ENCODE measurements at regions of chr17 and their contacts with region 1.

Region 1: DNA sequence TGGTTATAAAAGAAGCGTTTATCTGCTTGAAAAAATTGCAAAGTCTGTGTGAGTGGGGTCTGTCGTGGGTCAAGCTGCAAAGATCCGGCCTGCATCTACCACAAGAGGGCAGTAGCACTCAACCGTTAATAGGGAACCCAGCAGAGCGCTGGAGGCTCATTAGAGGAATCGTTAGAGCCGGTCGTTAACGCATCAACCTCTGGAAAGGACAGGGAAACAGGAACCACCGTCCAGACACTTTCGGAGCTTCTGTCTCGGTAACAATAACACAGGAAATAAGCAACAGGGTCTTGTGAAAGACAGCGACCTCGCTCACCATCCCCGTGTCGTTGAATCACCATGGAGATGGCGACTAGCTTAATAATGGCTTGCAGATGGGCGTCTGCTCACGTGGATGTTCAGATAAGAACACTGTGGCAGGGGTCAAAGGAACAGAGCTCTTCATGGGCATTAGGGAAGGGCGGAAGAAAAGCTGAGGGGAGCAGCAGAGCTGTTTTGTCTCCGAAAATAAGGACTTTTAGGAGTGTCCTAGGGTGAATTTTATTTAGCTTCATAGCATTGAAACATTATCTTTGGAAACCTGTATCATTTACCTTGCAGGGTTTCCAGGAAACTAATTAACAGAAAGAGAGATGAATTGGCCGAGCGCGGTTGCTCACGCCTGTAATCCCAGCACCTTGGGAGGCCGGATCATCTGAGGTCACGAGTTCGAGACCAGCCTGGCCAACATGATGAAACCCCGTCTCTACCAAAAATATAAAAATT is 11.9 kb upstream of the NSRP1 start:
- DNase-seq: peak; percentile 86 to 90
- H3K4me3 ChIP-seq: peak overlapping the region; percentile 42
- H3K4me3 Mint-ChIP-seq: peak overlapping the region; percentile 73
- H3K27ac Mint-ChIP-seq: peak overlapping the region; percentile 80
- H3K4me1 ChIP-seq: no peaks in the 10 kb centered on the region
- H3K4me1 Mint-ChIP-seq: peaks cover 7% of the 10 kb centered on the region
- H3K27me3 ChIP-seq: no peaks in the 10 kb centered on the region
- H3K27me3 Mint-ChIP-seq: no peaks in the 10 kb centered on the region
- CTCF ChIP-seq: peak; percentile 94 to 97

Region 2: GRCh38 chr17:30124273-30124796 is 19.6 kb after region 1 on chr17:
- CTCF ChIA-PET with region 1: interaction called, 19 read pairs
- POLR2A ChIA-PET with region 1: no interaction called
- intact Hi-C with region 1: no loop called
- DNase-seq: no peak
- H3K4me3 ChIP-seq: no peak overlapping the region
- H3K4me3 Mint-ChIP-seq: no peak overlapping the region
- H3K27ac Mint-ChIP-seq: no peak overlapping the region
- H3K4me1 ChIP-seq: no peaks in the 10 kb centered on the region
- H3K4me1 Mint-ChIP-seq: no peaks in the 10 kb centered on the region
- H3K27me3 ChIP-seq: no peaks in the 10 kb centered on the region
- H3K27me3 Mint-ChIP-seq: no peaks in the 10 kb centered on the region
- CTCF ChIP-seq: no peak

Region 3: DNA sequence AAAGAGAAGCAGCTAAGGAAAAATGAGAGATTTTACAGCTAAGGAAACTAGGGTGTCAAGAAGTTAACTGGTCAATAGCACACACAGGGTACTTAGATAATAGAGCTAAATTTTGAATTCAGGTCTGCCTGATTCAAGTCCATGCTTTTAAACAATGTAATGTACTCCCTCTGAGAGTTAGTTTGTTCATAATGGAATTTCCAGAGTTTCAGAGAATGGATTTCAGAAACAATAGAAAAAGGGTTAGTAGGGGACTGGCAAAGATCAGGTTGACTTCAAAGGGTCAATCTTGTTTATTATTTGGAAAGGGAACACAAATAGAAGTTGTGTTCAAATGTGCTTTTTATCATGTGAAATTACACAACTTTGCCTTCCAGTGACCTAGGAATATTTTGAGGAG is 29.8 kb after region 1 on chr17:
- CTCF ChIA-PET with region 1: no interaction called
- POLR2A ChIA-PET with region 1: no interaction called
- intact Hi-C with region 1: no loop called
- DNase-seq: no peak
- H3K4me3 ChIP-seq: no peak overlapping the region
- H3K4me3 Mint-ChIP-seq: no peak overlapping the region
- H3K27ac Mint-ChIP-seq: no peak overlapping the region
- H3K4me1 ChIP-seq: no peaks in the 10 kb centered on the region
- H3K4me1 Mint-ChIP-seq: no peaks in the 10 kb centered on the region
- H3K27me3 ChIP-seq: no peaks in the 10 kb centered on the region
- H3K27me3 Mint-ChIP-seq: no peaks in the 10 kb centered on the region
- CTCF ChIP-seq: no peak

Region 4: GRCh38 chr17:30208214-30208613 is 103.5 kb after region 1 on chr17:
- CTCF ChIA-PET with region 1: no interaction called
- POLR2A ChIA-PET with region 1: no interaction called
- intact Hi-C with region 1: no loop called
- DNase-seq: no peak
- H3K4me3 ChIP-seq: no peak overlapping the region
- H3K4me3 Mint-ChIP-seq: no peak overlapping the region
- H3K27ac Mint-ChIP-seq: no peak overlapping the region
- H3K4me1 ChIP-seq: no peaks in the 10 kb centered on the region
- H3K4me1 Mint-ChIP-seq: no peaks in the 10 kb centered on the region
- H3K27me3 ChIP-seq: no peaks in the 10 kb centered on the region
- H3K27me3 Mint-ChIP-seq: no peaks in the 10 kb centered on the region
- CTCF ChIP-seq: no peak